IMR-90 (cell line): ENCODE measurements at regions of chr15 and their contacts with region 1.

Region 1: GRCh38 chr15:59039225-59039624 is 51.8 kb downstream of the RNF111 start:
- DNase-seq: no peak
- ATAC-seq: no peak
- H3K4me3 ChIP-seq: no peak overlapping the region
- H3K27ac ChIP-seq: no peak overlapping the region
- H3K4me1 ChIP-seq: no peaks in the 10 kb centered on the region
- H3K27me3 ChIP-seq: no peaks in the 10 kb centered on the region
- CTCF ChIP-seq: no peak
- POLR2A ChIP-seq: no peak
- RAD21 ChIP-seq: no peak

Region 2: DNA sequence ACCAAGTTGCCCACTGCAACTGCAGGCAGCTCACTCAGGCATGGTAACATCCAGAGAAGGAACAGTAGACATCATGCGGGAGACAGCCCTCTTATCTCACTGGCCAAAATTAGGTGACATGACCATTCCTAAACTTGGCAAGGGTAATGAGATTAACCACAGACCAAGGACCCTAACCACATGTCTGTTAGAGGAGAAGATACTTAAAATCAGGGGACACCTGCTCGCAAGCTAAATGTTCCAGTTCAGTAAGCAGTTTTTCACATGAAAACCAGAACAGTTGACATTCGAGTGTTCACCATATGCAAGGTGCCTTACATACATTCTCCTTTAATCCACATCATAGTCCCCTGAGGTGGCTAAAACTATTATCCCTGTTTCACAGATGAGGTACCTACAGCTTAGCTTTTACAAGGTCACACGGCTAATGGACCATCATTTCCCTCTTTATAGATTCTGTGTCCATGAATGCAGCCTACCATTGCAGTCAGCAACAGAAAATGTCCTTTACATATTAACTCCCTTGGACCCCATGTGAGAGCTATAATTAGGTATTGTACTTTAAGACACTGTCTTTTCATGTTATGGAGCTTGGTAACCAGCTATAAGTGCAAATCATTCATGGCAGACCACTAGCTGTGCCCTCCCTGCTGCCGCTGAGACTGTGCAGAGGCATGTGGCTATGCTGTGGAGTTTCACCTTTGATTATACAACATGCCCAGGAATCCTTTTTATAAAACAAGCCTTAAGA is 453.4 kb before region 1 on chr15:
- CTCF ChIA-PET with region 1: no interaction called
- POLR2A ChIA-PET with region 1: no interaction called
- dilution Hi-C with region 1: no loop called
- in situ Hi-C with region 1: no loop called
- intact Hi-C with region 1: no loop called
- DNase-seq: no peak
- ATAC-seq: no peak
- H3K4me3 ChIP-seq: no peak overlapping the region
- H3K27ac ChIP-seq: no peak overlapping the region
- H3K4me1 ChIP-seq: peaks cover 5% of the 10 kb centered on the region; the same call in 1 of the 2 replicates
- H3K27me3 ChIP-seq: no peaks in the 10 kb centered on the region
- CTCF ChIP-seq: no peak
- POLR2A ChIP-seq: no peak
- RAD21 ChIP-seq: no peak

Region 3: GRCh38 chr15:59002418-59002859 is 36.8 kb before region 1 on chr15:
- CTCF ChIA-PET with region 1: no interaction called
- POLR2A ChIA-PET with region 1: no interaction called
- dilution Hi-C with region 1: no loop called
- in situ Hi-C with region 1: no loop called
- intact Hi-C with region 1: loop called (anchors 5 kb)
- DNase-seq: no peak
- ATAC-seq: no peak
- H3K4me3 ChIP-seq: no peak overlapping the region
- H3K27ac ChIP-seq: no peak overlapping the region
- H3K4me1 ChIP-seq: no peaks in the 10 kb centered on the region; the same call in 1 of the 2 replicates
- H3K27me3 ChIP-seq: no peaks in the 10 kb centered on the region
- CTCF ChIP-seq: no peak
- POLR2A ChIP-seq: no peak
- RAD21 ChIP-seq: no peak

Region 4: GRCh38 chr15:59087731-59088130 is 48.5 kb after region 1 on chr15:
- CTCF ChIA-PET with region 1: no interaction called
- POLR2A ChIA-PET with region 1: no interaction called
- dilution Hi-C with region 1: no loop called
- in situ Hi-C with region 1: no loop called
- intact Hi-C with region 1: loop called (anchors 10 kb)
- DNase-seq: no peak
- ATAC-seq: no peak
- H3K4me3 ChIP-seq: no peak overlapping the region
- H3K27ac ChIP-seq: no peak overlapping the region
- H3K4me1 ChIP-seq: no peaks in the 10 kb centered on the region
- H3K27me3 ChIP-seq: no peaks in the 10 kb centered on the region
- CTCF ChIP-seq: no peak
- POLR2A ChIP-seq: no peak
- RAD21 ChIP-seq: no peak